Activated CD4-positive, alpha-beta T cell treated with anti-CD3 and anti-CD28 coated beads for 36 hours (primary cell): ENCODE measurements at regions of chr17 and their contacts with region 1.

Region 1: DNA sequence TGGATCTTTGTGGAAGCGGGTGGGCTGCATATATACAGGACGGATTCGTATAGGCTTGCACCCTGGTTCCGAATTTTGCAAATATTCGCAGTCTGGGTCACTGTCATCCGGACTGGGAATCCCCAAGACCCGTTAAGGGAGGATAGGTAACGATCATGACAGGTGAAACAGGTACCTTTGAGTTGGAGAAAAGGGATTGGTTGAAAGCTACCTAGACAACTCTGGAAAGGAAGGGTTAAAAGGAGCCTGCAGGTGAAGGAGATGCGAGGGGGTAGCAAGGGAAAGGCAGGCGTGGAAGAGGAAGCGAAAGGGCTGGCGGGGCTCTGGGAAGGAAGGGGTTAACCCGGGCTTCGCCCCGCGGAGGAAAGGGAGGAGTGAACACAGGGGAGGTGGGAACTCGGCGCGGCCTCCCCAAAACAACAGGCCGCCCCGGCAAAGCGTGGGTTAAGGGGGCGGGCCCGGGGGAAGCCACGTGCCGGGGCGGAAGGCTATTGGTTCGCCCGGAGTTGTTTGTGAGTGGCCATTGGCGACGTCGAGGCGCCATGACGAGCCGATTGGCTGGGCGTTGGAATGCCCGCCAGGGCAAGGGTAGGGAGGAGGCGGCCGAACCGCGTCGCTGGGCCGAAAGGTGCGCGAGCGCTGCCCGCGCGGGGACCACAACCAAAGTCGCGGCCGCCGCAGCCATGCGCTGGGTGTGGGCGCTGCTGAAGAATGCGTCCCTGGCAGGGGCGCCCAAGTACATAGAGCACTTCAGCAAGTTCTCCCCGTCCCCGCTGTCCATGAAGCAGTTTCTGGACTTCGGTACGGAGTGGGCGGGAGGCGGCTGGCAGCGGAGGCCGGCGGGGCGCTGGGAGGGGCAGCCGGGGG is at the start of gene PDK2:
- DNase-seq: peak; percentile 97
- ATAC-seq: peak; percentile 93
- H3K4me3 Mint-ChIP-seq: peak within 1 kb of the TSS; percentile 84
- H3K27ac Mint-ChIP-seq: peak within 1 kb of the TSS; percentile 91
- H3K4me1 Mint-ChIP-seq: peaks cover 19% of the 10 kb centered on the region
- H3K27me3 Mint-ChIP-seq: no peaks in the 10 kb centered on the region
- total RNA-seq, gene PDK2: 9.8 to 16.2 TPM

Region 2: DNA sequence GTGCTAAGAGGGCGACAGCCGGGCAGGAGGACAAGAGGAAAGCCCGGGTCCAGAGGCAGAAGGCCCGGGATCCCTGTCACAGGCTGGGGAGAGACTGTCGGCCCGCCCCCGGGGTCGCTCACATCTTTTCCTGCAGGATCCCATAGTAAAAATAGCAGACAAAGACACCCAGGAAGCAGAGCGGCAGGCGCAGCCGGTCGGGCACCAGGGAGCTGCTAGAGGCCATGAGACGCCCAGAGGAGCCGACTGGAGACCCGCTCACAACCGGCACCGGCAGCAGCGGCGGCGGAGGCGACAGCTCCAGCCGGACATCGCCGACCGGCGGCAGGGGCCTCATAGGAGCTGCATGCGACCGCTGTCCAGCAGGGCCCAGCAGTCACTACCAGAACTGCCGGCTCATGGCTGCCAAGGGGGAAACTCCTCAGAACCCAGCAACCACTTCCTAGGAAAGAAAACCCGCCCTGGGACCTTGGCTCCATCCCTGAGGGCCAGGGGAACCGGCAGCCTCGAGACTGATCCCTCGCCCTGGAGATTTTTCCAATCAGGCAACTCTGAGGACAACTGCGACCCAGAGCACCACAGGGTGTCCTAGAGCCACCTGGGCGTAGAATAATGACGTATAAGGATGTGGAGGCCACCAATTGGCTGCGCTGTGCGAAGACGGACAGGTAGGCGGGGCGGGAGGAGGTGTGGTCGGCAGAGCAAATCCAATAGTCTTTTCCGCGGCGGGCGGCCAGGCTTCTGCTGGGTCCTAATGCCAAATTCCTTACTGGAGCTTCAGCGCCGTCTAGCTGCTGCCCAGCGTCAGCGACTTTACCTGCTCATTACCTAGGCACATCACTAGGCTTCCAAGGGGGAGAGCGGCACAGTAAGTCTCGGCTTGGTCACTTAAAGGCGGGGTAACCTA is 387.1 kb before region 1 on chr17 and contains the start of gene SLC35B1:
- CTCF ChIA-PET with region 1: no interaction called
- POLR2A ChIA-PET with region 1: no interaction called
- intact Hi-C with region 1: loop called in 1 of 2 experiments (anchors 1 kb)
- DNase-seq: peak; percentile 100
- ATAC-seq: peak; percentile 97
- H3K4me3 Mint-ChIP-seq: peak within 1 kb of the TSS; percentile 93
- H3K27ac Mint-ChIP-seq: peak within 1 kb of the TSS; percentile 97
- H3K4me1 Mint-ChIP-seq: peaks cover 39% of the 10 kb centered on the region
- H3K27me3 Mint-ChIP-seq: no peaks in the 10 kb centered on the region
- total RNA-seq, gene SLC35B1: 43.9 to 59.4 TPM

Region 3: GRCh38 chr17:49997791-49998703 is 96.9 kb before region 1 on chr17:
- CTCF ChIA-PET with region 1: interaction called, 43 read pairs
- POLR2A ChIA-PET with region 1: no interaction called
- intact Hi-C with region 1: loop called in 1 of 2 experiments (anchors 1 kb)
- DNase-seq: peak; percentile 92
- ATAC-seq: peak; percentile 86
- H3K4me3 Mint-ChIP-seq: no peak overlapping the region
- H3K27ac Mint-ChIP-seq: no peak overlapping the region
- H3K4me1 Mint-ChIP-seq: peaks cover 23% of the 10 kb centered on the region
- H3K27me3 Mint-ChIP-seq: peaks cover 56% of the 10 kb centered on the region

Region 4: GRCh38 chr17:50079334-50080095 is 15.5 kb before region 1 on chr17:
- CTCF ChIA-PET with region 1: interaction called, 23 read pairs
- POLR2A ChIA-PET with region 1: no interaction called
- intact Hi-C with region 1: no loop called
- DNase-seq: peak; percentile 57
- ATAC-seq: peak; percentile 57
- H3K4me3 Mint-ChIP-seq: no peak overlapping the region
- H3K27ac Mint-ChIP-seq: no peak overlapping the region
- H3K4me1 Mint-ChIP-seq: no peaks in the 10 kb centered on the region
- H3K27me3 Mint-ChIP-seq: no peaks in the 10 kb centered on the region

Region 5: GRCh38 chr17:50129728-50130558 is 35.0 kb after region 1 on chr17 and contains the start of gene SAMD14:
- CTCF ChIA-PET with region 1: no interaction called
- POLR2A ChIA-PET with region 1: interaction called, 4 read pairs
- intact Hi-C with region 1: loop called in 1 of 2 experiments (anchors 2 kb)
- DNase-seq: peak; percentile 64
- ATAC-seq: peak; percentile 61
- H3K4me3 Mint-ChIP-seq: peak within 1 kb of the TSS; percentile 63
- H3K27ac Mint-ChIP-seq: peak within 1 kb of the TSS; percentile 19
- H3K4me1 Mint-ChIP-seq: peaks cover 28% of the 10 kb centered on the region
- H3K27me3 Mint-ChIP-seq: peaks cover 13% of the 10 kb centered on the region
- total RNA-seq, gene SAMD14: 0.77 to 1.1 TPM

Region 6: DNA sequence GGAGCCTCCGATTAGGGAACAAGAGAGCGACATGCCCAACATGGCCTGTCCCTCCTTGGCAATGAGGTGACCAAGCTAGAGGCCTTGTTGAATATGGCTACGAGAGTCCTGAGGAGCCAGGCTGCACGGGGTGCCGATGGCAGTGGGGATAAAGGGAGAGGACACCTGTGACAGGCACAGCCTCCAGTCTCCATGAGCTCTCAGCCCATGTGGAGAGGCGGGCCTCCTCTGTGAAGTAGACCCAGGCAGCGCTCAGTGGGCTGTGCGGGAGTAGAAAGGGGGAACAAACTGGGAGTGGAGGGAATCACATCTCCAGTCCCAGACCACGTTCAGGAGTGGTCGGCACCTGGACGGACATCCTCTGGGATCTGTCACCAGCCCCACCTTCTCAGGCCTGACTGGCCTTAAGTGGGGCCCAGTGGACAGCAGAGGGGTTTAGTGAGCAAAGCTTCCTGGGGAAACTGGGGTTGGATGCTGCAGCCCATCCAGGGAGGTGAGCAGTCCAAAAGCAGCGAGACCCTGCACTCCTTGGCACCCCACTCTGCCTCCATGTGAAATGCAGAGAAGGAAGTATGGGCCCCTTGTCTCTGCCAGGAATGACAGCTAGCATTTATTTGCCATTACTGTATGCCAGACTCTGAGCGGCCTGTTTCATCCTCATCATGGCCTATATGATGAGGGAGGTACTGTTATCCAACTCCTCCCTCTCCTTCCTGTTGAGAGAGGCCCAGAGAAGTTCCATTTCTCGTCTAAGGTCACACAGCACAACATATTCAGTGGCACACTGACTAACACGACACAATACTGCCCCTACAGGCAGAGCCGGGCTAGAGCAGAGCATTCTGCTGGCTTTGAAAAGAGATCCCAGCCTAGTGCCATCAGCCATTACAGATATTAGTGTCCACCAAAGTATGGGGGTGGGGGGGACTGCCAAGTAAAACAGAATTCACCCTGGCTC is 174.8 kb after region 1 on chr17:
- CTCF ChIA-PET with region 1: interaction called, 6 read pairs
- POLR2A ChIA-PET with region 1: no interaction called
- intact Hi-C with region 1: loop called in 1 of 2 experiments (anchors 2 kb)
- DNase-seq: peak; percentile 86
- ATAC-seq: peak; percentile 97
- H3K4me3 Mint-ChIP-seq: no peak overlapping the region
- H3K27ac Mint-ChIP-seq: no peak overlapping the region
- H3K4me1 Mint-ChIP-seq: peaks cover 5% of the 10 kb centered on the region
- H3K27me3 Mint-ChIP-seq: peaks cover 16% of the 10 kb centered on the region